Endothelial cell of umbilical vein (primary cell): ENCODE measurements at regions of chr18 and their contacts with region 1.

Region 1: GRCh38 chr18:62425465-62426195 is 97.2 kb upstream of the ZCCHC2 start:
- DNase-seq: peak; percentile 98
- H3K4me3 ChIP-seq: peak overlapping the region in 2 of 3 experiments; percentile 28 to 64
- H3K27ac ChIP-seq: peak overlapping the region; percentile 86
- H3K4me1 ChIP-seq: peaks cover 16% of the 10 kb centered on the region
- H3K27me3 ChIP-seq: no peaks in the 10 kb centered on the region
- CTCF ChIP-seq: peak; percentile 78 to 86
- POLR2A ChIP-seq: no peak

Region 2: GRCh38 chr18:62324917-62325805 is 100.5 kb before region 1 on chr18 and contains the start of gene TNFRSF11A:
- CTCF ChIA-PET with region 1: interaction called, 13 read pairs
- POLR2A ChIA-PET with region 1: no interaction called
- dilution Hi-C with region 1: no loop called
- intact Hi-C with region 1: no loop called
- DNase-seq: peak; percentile 30
- H3K4me3 ChIP-seq: peak within 1 kb of the TSS; percentile 55 to 84 (median 83)
- H3K27ac ChIP-seq: no peak within 1 kb of the TSS
- H3K4me1 ChIP-seq: peaks cover 55% of the 10 kb centered on the region
- H3K27me3 ChIP-seq: no peaks in the 10 kb centered on the region
- CTCF ChIP-seq: peak; percentile 12 to 42
- POLR2A ChIP-seq: no peak
- total RNA-seq, gene TNFRSF11A: 11.1 and 11.9 TPM in 2 replicates

Region 3: DNA sequence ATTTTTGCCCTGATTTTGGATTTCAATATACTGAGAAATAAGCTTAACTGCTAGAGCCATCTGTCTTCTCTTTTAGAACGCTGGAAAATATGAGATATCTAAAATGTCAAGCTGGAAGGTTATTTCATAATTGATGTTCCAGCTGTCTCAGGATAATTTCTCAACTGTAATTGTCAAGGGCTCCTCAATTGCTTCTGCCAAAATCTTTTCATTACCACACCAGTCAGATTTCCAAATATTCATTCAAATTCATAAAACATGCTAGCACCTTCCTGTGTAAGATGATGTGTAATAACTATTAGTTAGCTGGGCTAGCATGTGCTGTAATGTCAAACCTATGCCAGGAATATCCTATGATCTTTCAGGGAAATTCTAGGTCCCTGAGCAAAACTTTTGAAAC is 12.4 kb before region 1 on chr18:
- CTCF ChIA-PET with region 1: interaction called, 12 read pairs
- POLR2A ChIA-PET with region 1: no interaction called
- dilution Hi-C with region 1: no loop called
- intact Hi-C with region 1: no loop called
- DNase-seq: no peak
- H3K4me3 ChIP-seq: no peak overlapping the region
- H3K27ac ChIP-seq: no peak overlapping the region
- H3K4me1 ChIP-seq: no peaks in the 10 kb centered on the region
- H3K27me3 ChIP-seq: peaks cover 7% of the 10 kb centered on the region in 2 experiments
- CTCF ChIP-seq: no peak
- POLR2A ChIP-seq: no peak

Region 4: GRCh38 chr18:62485684-62486083 is 60.1 kb after region 1 on chr18:
- CTCF ChIA-PET with region 1: interaction called, 7 read pairs
- POLR2A ChIA-PET with region 1: no interaction called
- dilution Hi-C with region 1: no loop called
- intact Hi-C with region 1: loop called (anchors 1 kb)
- DNase-seq: peak; percentile 91
- H3K4me3 ChIP-seq: peak overlapping the region in 1 of 3 experiments; percentile 5
- H3K27ac ChIP-seq: peak overlapping the region; percentile 65
- H3K4me1 ChIP-seq: peaks cover 23% of the 10 kb centered on the region
- H3K27me3 ChIP-seq: no peaks in the 10 kb centered on the region
- CTCF ChIP-seq: no peak
- POLR2A ChIP-seq: no peak

Region 5: GRCh38 chr18:62555135-62555534 is 129.5 kb after region 1 on chr18:
- CTCF ChIA-PET with region 1: interaction called, 10 read pairs
- POLR2A ChIA-PET with region 1: no interaction called
- dilution Hi-C with region 1: no loop called
- intact Hi-C with region 1: loop called (anchors 1 kb)
- DNase-seq: peak; percentile 76
- H3K4me3 ChIP-seq: no peak overlapping the region
- H3K27ac ChIP-seq: peak overlapping the region; percentile 0
- H3K4me1 ChIP-seq: peaks cover 25% of the 10 kb centered on the region
- H3K27me3 ChIP-seq: no peaks in the 10 kb centered on the region
- CTCF ChIP-seq: no peak
- POLR2A ChIP-seq: no peak

Region 6: DNA sequence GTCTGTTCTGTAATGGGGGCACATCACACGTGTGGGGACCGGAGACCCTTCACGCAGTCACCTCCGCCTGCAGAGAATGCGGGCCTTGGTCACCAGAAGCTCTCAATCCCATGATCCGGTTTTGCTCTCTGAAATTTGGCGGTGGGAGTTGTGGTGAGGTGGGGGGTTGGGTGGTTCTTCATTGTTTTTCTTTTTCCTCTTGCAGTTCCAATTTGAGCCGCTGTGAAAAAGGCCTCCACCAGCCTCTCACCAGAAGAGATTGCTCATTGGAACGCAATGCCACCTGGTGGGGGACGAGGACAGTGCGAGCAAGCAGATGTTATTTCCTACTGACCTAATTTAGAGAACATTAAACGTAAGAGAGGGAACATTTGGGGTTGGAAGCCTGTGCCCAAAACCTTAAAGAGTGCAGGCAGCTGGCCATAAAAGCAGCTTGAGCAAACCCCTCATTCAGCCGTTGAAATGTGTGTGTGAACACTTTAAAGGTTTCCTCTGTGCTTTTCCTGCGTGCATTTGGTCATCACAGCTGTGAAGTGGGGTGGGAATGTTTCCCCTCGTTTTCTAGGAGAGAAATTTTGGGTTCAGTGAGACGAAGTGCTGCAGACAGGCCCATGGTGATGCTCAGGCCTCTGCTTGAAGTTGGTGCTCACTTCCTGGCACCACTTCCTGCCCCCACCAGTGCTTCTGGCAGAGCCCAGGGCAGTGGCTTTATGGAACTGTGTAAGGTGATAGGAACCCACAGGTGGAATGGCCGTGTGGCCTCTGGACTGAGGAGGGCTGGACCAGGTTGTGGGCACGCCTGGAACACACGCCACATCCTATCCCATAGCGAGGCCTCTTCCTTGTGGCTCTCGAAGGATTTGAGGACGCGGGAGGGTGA is 158.9 kb after region 1 on chr18:
- CTCF ChIA-PET with region 1: interaction called, 9 read pairs
- POLR2A ChIA-PET with region 1: no interaction called
- dilution Hi-C with region 1: no loop called
- intact Hi-C with region 1: loop called (anchors 1 kb)
- DNase-seq: peak; percentile 90
- H3K4me3 ChIP-seq: no peak overlapping the region
- H3K27ac ChIP-seq: no peak overlapping the region
- H3K4me1 ChIP-seq: peaks cover 11% of the 10 kb centered on the region
- H3K27me3 ChIP-seq: no peaks in the 10 kb centered on the region
- CTCF ChIP-seq: peak; percentile 92 to 95
- POLR2A ChIP-seq: no peak

Region 7: GRCh38 chr18:62651276-62652056 is 225.8 kb after region 1 on chr18:
- CTCF ChIA-PET with region 1: no interaction called
- POLR2A ChIA-PET with region 1: no interaction called
- dilution Hi-C with region 1: no loop called
- intact Hi-C with region 1: no loop called
- DNase-seq: no peak
- H3K4me3 ChIP-seq: no peak overlapping the region
- H3K27ac ChIP-seq: no peak overlapping the region
- H3K4me1 ChIP-seq: no peaks in the 10 kb centered on the region
- H3K27me3 ChIP-seq: peaks cover 4 to 5% of the 10 kb centered on the region in 2 experiments
- CTCF ChIP-seq: no peak
- POLR2A ChIP-seq: no peak